Psoas muscle (tissue), 8 donors: ENCODE measurements at regions of chr2 and their contacts with region 1.

Region 1: DNA sequence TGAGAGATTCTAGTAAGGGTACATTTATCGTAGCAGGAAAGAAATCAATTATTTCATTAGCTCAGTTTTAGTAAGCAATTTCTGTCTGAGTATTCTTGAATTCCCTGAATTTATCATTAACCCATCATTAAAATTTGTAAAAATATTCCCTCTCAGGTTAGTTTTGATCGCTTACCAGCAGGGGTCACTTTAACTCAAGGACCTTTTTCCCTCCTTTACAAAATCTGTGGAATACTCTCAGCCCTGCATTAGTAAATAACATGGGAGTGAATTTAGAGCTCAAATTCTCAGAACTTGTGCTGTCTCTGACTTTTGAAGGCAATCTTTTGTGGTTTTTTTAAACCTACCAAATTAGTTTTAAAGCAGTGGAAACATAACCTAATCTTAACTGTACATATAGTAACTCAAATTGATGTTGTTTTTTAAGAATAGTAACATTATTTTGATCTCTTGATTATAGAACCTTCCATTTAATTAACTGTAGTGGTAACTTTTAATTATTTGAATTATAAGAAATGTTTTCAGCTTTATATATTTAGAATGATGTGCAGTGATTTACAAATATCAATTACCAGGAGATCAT is 97.2 kb downstream of the AGPS start:
- DNase-seq: no peak
- ATAC-seq: no peak
- H3K4me3 ChIP-seq: no peak overlapping the region
- H3K27ac ChIP-seq: no peak overlapping the region
- H3K4me1 ChIP-seq: no peaks in the 10 kb centered on the region
- H3K27me3 ChIP-seq: no peaks in the 10 kb centered on the region
- CTCF ChIP-seq: peak; percentile 44

Region 2: DNA sequence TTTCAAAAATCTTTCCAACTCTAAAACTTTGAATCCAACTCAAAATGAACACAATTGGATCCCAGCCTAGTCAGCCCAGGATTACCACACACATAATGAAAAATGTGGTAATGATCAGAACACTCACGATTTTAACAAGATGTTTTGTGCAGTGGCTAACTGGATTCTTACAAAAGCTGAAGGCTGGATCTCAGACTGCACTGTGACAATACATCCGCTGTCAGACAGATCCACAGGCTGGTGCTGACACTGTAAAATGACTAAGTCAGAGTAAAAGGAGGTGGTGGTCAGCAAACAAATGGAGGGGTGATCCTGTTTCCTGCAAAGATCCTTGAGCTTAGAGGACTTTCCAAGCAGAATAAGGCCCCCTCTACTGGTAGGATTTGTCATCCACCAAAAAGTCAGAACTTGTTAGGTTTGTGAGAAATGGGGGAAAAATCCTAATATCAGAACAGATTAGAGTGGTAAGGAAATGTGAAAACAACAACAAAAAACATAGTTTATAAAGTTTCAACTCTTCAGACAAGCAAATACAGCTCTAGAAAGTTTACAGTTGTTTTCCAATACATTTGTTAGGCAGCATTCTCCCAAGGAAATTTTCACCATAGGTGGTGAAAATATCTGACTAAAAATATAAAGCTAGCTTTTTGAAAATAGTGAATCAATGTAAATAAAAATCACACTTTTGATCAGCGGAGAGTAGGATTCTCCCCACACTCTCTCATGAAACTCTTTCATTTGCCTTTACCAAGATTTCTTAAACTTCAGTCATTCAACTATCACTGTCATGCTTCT is 114.7 kb after region 1 on chr2:
- intact Hi-C with region 1: loop called in 1 of 2 experiments (anchors 10 kb)
- DNase-seq: no peak
- ATAC-seq: peak in 3 of 4 donors; percentile 37 to 58 (median 57)
- H3K4me3 ChIP-seq: no peak overlapping the region
- H3K27ac ChIP-seq: no peak overlapping the region
- H3K4me1 ChIP-seq: no peaks in the 10 kb centered on the region
- H3K27me3 ChIP-seq: no peaks in the 10 kb centered on the region
- CTCF ChIP-seq: peak; percentile 59

Region 3: GRCh38 chr2:177633910-177634294 is 144.1 kb after region 1 on chr2:
- intact Hi-C with region 1: no loop called
- DNase-seq: no peak
- ATAC-seq: no peak
- H3K4me3 ChIP-seq: peak overlapping the region; percentile 66
- H3K27ac ChIP-seq: peak overlapping the region; percentile 58
- H3K4me1 ChIP-seq: peaks cover 7% of the 10 kb centered on the region
- H3K27me3 ChIP-seq: no peaks in the 10 kb centered on the region
- CTCF ChIP-seq: no peak

Region 4: GRCh38 chr2:177724398-177725287 is 234.8 kb after region 1 on chr2:
- intact Hi-C with region 1: loop called in 1 of 2 experiments (anchors 2 kb)
- DNase-seq: peak; percentile 28 to 54
- ATAC-seq: peak; percentile 63 to 87 (median 76)
- H3K4me3 ChIP-seq: no peak overlapping the region
- H3K27ac ChIP-seq: no peak overlapping the region
- H3K4me1 ChIP-seq: peaks cover 4% of the 10 kb centered on the region
- H3K27me3 ChIP-seq: no peaks in the 10 kb centered on the region
- CTCF ChIP-seq: peak; percentile 84